MCF 10A (cell line): ENCODE measurements at regions of chr1 and their contacts with region 1.

Region 1: DNA sequence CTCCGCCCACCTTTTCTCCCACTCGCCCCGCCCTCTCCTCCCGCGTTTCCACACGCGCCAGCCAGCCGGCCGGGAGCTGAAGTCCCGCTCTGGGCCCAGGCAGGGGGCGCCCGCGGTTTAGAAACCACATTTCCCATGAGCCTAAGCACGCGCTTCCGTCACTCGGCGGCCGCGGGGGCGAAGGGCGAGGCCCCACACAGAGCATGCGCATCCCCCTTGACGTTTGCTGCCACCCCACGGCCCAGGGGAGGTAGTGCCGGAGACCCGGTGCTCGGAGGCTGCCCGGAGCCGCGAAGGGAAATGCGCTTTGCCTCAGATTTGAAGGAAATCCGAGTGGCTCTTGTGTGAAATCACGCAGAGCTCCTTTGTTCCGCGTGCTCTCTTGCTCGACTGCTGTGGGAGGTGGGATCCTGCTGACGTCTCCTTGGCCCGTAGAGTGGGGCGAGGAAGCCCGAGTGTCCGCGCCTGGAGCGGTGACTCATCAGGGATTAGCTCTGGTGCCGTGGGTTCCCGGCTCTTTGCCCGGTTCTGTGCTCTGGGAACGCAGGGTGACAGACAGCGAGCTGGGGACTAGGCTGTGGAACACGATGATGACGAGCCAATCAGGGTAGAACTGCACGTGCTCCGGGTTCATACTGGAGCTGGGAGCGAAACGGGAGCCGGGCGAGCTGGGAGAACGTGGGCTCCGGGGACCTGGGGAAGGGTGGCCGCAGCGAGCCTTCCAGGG is 407 bp upstream of the B3GALNT2 start:
- DNase-seq: peak; percentile 100
- H3K4me3 Mint-ChIP-seq: peak overlapping the region; percentile 97
- H3K27ac Mint-ChIP-seq: peak overlapping the region; percentile 98
- H3K4me1 Mint-ChIP-seq: peaks cover 31% of the 10 kb centered on the region
- H3K27me3 Mint-ChIP-seq: no peaks in the 10 kb centered on the region
- CTCF ChIP-seq: peak; percentile 99

Region 2: DNA sequence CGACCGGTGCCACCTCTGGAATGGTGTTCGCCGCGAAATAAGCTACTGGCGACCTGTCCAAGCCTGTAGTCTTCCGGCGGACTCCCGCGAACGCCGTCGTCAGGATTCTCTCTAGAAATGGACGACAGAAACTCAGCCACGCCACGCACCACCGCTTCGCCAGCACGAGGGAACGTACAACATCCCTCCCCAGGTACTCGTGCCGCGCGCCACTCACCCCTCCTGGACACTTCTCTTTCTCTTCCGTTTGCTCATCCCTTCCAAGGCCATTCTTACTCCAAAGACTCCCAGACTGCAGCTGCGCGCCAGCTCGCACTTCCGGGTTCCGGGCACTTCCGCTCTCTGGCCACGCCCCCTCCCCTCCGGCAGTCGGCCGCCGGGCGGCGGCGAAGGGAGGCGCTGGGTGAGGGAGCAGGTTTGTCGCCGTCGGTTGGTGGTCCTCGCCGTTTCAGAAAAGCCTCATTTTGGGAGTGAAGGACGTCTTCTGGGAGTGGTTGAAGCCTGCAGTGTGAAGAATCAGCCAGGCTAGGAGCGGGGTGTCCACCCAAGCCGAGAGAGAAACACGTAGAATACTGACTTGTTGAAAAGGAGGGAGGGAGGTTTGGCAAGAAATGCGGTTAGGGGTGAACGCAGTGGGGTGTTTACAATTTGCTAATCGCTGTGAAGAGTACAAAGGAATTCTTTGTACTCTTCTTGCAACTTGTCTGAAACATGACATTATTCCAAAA is 343.5 kb before region 1 on chr1 and contains the start of gene RBM34:
- CTCF ChIA-PET with region 1: interaction called, 3 read pairs
- POLR2A ChIA-PET with region 1: interaction called, 11 read pairs
- intact Hi-C with region 1: no loop called
- DNase-seq: peak; percentile 97
- H3K4me3 Mint-ChIP-seq: peak within 1 kb of the TSS; percentile 84
- H3K27ac Mint-ChIP-seq: peak within 1 kb of the TSS; percentile 95
- H3K4me1 Mint-ChIP-seq: peaks cover 14% of the 10 kb centered on the region
- H3K27me3 Mint-ChIP-seq: no peaks in the 10 kb centered on the region
- CTCF ChIP-seq: no peak
- total RNA-seq, gene RBM34: 150 and 184 TPM in 2 replicates

Region 3: GRCh38 chr1:235367000-235367908 is 137.4 kb before region 1 on chr1 and contains the start of gene TBCE:
- CTCF ChIA-PET with region 1: no interaction called
- POLR2A ChIA-PET with region 1: interaction called, 27 read pairs
- intact Hi-C with region 1: no loop called
- DNase-seq: peak; percentile 100
- H3K4me3 Mint-ChIP-seq: peak within 1 kb of the TSS; percentile 96
- H3K27ac Mint-ChIP-seq: peak within 1 kb of the TSS; percentile 94
- H3K4me1 Mint-ChIP-seq: peaks cover 26% of the 10 kb centered on the region
- H3K27me3 Mint-ChIP-seq: no peaks in the 10 kb centered on the region
- CTCF ChIP-seq: peak; percentile 16
- total RNA-seq, gene TBCE: 45.6 and 52.5 TPM in 2 replicates

Region 4: GRCh38 chr1:235397733-235398132 is 106.9 kb before region 1 on chr1:
- CTCF ChIA-PET with region 1: no interaction called
- POLR2A ChIA-PET with region 1: no interaction called
- intact Hi-C with region 1: no loop called
- DNase-seq: peak; percentile 94
- H3K4me3 Mint-ChIP-seq: no peak overlapping the region
- H3K27ac Mint-ChIP-seq: no peak overlapping the region
- H3K4me1 Mint-ChIP-seq: peaks cover 39% of the 10 kb centered on the region
- H3K27me3 Mint-ChIP-seq: no peaks in the 10 kb centered on the region
- CTCF ChIP-seq: no peak

Region 5: GRCh38 chr1:235486321-235486720 is 18.3 kb before region 1 on chr1:
- CTCF ChIA-PET with region 1: interaction called, 7 read pairs
- POLR2A ChIA-PET with region 1: interaction called, 65 read pairs
- intact Hi-C with region 1: no loop called
- DNase-seq: no peak
- H3K4me3 Mint-ChIP-seq: no peak overlapping the region
- H3K27ac Mint-ChIP-seq: no peak overlapping the region
- H3K4me1 Mint-ChIP-seq: no peaks in the 10 kb centered on the region
- H3K27me3 Mint-ChIP-seq: no peaks in the 10 kb centered on the region
- CTCF ChIP-seq: no peak

Region 6: GRCh38 chr1:235582130-235582529 is 77.5 kb after region 1 on chr1:
- CTCF ChIA-PET with region 1: no interaction called
- POLR2A ChIA-PET with region 1: no interaction called
- intact Hi-C with region 1: no loop called
- DNase-seq: no peak
- H3K4me3 Mint-ChIP-seq: no peak overlapping the region
- H3K27ac Mint-ChIP-seq: no peak overlapping the region
- H3K4me1 Mint-ChIP-seq: no peaks in the 10 kb centered on the region
- H3K27me3 Mint-ChIP-seq: no peaks in the 10 kb centered on the region
- CTCF ChIP-seq: no peak

Region 7: GRCh38 chr1:235791532-235792060 is 286.9 kb after region 1 on chr1:
- CTCF ChIA-PET with region 1: interaction called, 3 read pairs
- POLR2A ChIA-PET with region 1: interaction called, 10 read pairs
- intact Hi-C with region 1: no loop called
- DNase-seq: no peak
- H3K4me3 Mint-ChIP-seq: no peak overlapping the region
- H3K27ac Mint-ChIP-seq: no peak overlapping the region
- H3K4me1 Mint-ChIP-seq: peaks cover 6% of the 10 kb centered on the region
- H3K27me3 Mint-ChIP-seq: no peaks in the 10 kb centered on the region
- CTCF ChIP-seq: no peak

Region 8: DNA sequence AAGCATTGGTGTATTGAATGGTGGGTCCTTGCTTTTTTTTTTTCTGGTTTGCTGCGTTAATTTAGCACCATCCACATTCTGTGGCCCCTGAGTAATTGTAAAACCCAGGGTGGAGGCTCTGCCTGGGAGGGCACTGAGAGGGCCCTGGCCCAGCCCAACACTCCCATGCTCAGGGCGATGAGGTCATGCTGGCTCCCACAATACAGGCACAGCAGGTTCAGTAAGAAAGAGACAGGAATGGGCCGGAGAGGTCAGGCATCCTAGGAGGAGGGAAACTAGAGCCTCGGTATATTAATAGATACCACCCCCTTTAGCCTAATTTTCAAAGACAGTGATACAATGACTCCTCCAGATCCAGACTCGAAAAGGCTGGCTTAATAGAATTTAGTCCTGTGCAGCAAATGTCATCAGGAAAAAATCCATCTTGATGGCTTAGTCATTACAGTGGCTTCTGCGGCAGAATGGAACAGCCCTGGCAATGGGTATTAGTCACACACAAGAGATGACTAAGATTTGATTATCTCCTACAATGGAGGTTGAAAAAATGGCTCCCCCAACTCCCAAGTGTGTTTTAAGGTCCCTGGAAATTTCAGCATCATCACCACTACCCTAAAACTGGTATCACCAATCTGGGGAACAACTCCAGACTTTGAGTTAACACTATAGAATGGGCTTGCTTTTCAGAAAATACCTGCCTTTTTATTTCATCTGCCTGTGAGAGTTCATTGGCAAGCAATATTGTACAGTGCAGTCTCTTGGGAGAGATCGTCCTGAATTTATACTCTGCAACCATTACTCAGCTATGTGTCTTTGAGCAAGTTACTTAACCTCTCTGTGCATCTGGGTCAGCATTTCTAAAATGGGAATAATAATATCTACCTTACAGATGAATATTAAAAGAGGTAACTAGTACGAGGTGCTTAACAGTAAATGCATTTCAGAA is 406.0 kb after region 1 on chr1:
- CTCF ChIA-PET with region 1: interaction called, 11 read pairs
- POLR2A ChIA-PET with region 1: interaction called, 9 read pairs
- intact Hi-C with region 1: no loop called
- DNase-seq: peak; percentile 97
- H3K4me3 Mint-ChIP-seq: peak overlapping the region; percentile 22
- H3K27ac Mint-ChIP-seq: peak overlapping the region; percentile 99
- H3K4me1 Mint-ChIP-seq: peaks cover 55% of the 10 kb centered on the region
- H3K27me3 Mint-ChIP-seq: no peaks in the 10 kb centered on the region
- CTCF ChIP-seq: no peak